ENCODE measurements at regions of chr1 and their contacts with region 1.

Region 1: DNA sequence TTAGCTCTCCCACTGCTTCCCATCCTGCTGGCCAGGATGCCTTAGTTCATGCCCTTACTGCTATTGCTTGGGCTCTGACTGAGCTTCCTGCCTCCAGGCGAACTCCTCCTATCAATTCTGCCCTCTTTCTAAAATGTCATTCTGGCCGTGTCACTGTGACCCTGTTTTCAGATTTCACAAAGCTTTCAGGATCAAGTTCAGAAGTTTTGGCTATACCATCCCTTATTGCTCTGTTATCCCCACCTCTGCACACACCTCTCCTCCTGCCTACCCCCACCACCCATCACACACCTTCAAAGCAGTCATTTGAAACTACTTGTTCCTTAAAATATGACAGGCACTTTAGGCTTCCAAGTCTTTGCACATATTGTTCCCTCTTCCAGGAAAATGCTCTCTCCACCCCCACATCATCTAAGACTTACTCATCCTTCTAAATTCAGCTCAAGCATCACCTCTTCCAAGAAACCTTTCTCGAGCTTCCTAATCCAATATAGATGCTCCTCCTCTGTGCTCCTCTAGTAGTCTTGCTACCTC is 278.1 kb downstream of the BRINP2 start:
- DNase-seq: peak; percentile 51 to 74
- ATAC-seq: peak; percentile 84
- H3K4me3 ChIP-seq: no peak overlapping the region
- H3K27ac ChIP-seq: peak overlapping the region; percentile 75 to 80 (median 78)
- H3K4me1 ChIP-seq: peaks cover 48 to 50% of the 10 kb centered on the region in 2 donors
- H3K27me3 ChIP-seq: no peaks in the 10 kb centered on the region
- CTCF ChIP-seq: no peak
- POLR2A ChIP-seq: peak in 1 of 2 donors; percentile 55

Region 2: GRCh38 chr1:177274687-177275211 is 174.1 kb before region 1 on chr1:
- in situ Hi-C with region 1: no loop called
- intact Hi-C with region 1: loop called (anchors 10 kb)
- DNase-seq: peak; percentile 50 to 77
- ATAC-seq: peak; percentile 96 to 98
- H3K4me3 ChIP-seq: no peak overlapping the region
- H3K27ac ChIP-seq: peak overlapping the region; percentile 47 to 79 (median 64)
- H3K4me1 ChIP-seq: peaks cover 27 to 35% of the 10 kb centered on the region in 2 donors
- H3K27me3 ChIP-seq: no peaks in the 10 kb centered on the region
- CTCF ChIP-seq: no peak
- POLR2A ChIP-seq: no peak

Region 3: DNA sequence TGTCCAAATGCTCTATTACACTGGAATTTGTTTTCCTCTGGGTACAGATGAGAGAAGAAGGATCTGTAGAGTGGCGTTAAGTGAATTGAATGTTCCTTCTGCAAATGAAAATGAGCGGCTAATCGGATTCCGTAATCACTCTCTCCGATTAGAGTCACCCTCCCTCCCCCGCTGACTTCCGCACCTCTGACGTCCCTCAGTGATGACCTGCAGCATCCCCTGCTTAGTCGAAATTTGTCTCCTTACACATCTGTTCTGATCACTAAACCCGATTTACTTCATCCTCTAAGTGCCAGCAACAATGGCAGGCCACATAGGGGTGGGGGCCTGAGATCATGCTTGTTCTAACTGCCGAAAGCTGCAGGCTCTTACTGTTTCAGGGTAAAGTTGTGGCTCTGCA is 142.3 kb after region 1 on chr1:
- in situ Hi-C with region 1: loop called in 1 of 4 experiments (anchors 10 kb)
- intact Hi-C with region 1: no loop called
- DNase-seq: no peak
- ATAC-seq: no peak
- H3K4me3 ChIP-seq: no peak overlapping the region
- H3K27ac ChIP-seq: no peak overlapping the region
- H3K4me1 ChIP-seq: peaks cover 0 to 12% of the 10 kb centered on the region in 2 donors
- H3K27me3 ChIP-seq: no peaks in the 10 kb centered on the region
- CTCF ChIP-seq: no peak
- POLR2A ChIP-seq: no peak

Region 4: DNA sequence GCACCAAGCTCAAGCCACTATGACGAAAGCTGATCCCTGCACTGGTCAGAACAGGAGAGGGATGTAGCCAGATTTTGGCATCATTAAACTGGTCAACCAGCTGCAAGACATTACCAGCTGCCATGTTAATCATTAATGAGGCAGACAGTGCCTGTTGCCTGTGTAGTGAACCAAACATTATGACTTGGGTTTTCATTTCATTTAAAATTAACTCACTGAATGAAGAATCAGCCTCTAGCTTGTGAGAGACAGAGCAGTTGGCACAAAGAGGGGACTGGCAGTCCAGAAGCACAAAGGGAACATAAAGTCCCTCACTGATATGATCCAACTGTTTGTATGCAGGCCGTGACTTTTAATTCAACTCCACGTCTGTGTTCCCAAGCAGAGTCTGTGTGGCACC is 202.1 kb after region 1 on chr1:
- in situ Hi-C with region 1: loop called in 1 of 4 experiments (anchors 5 kb)
- intact Hi-C with region 1: loop called (anchors 2 kb)
- DNase-seq: peak; percentile 81 to 87
- ATAC-seq: peak; percentile 98 to 99
- H3K4me3 ChIP-seq: no peak overlapping the region
- H3K27ac ChIP-seq: peak overlapping the region; percentile 77 to 94 (median 87)
- H3K4me1 ChIP-seq: peaks cover 4 to 36% of the 10 kb centered on the region in 2 donors
- H3K27me3 ChIP-seq: no peaks in the 10 kb centered on the region
- CTCF ChIP-seq: no peak
- POLR2A ChIP-seq: no peak

Region 5: DNA sequence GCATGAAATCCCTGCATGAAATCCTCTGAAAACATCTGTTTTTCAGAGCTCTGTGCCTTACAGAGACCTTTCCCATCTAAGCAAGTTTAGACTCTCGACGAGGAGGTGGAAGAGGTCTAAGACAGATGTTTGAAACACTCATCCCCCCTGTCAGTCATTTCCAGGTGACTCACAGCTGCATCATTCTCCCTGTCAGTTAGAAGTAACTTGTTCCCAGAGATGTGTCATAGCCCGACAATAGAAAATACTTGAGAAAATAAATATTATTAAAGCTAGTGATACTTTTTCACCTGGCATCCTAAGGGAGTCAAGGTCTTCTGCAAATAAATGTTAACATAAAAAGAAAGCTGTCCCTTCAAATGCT is 562.6 kb after region 1 on chr1:
- in situ Hi-C with region 1: no loop called
- intact Hi-C with region 1: loop called (anchors 10 kb)
- DNase-seq: peak; percentile 55 to 67
- ATAC-seq: peak; percentile 100
- H3K4me3 ChIP-seq: no peak overlapping the region
- H3K27ac ChIP-seq: peak overlapping the region; percentile 65 to 84 (median 78)
- H3K4me1 ChIP-seq: peaks cover 13 to 22% of the 10 kb centered on the region in 2 donors
- H3K27me3 ChIP-seq: no peaks in the 10 kb centered on the region
- CTCF ChIP-seq: no peak
- POLR2A ChIP-seq: no peak

Region 6: GRCh38 chr1:179025125-179025974 is 1576.5 kb after region 1 on chr1 and contains the start of gene FAM20B:
- in situ Hi-C with region 1: no loop called
- intact Hi-C with region 1: loop called (anchors 5 kb)
- DNase-seq: peak; percentile 91 to 94
- ATAC-seq: peak; percentile 79 to 86
- H3K4me3 ChIP-seq: peak within 1 kb of the TSS; percentile 77 to 99 (median 89)
- H3K27ac ChIP-seq: peak within 1 kb of the TSS; percentile 92 to 99 (median 98)
- H3K4me1 ChIP-seq: peaks cover 30 to 44% of the 10 kb centered on the region in 2 donors
- H3K27me3 ChIP-seq: no peaks in the 10 kb centered on the region
- CTCF ChIP-seq: peak in 1 of 5 experiments; percentile 25
- POLR2A ChIP-seq: no peak
- total RNA-seq, gene FAM20B: 19.7 to 43.7 (median 32.6) TPM

Measured in gastrocnemius medialis (tissue), 4 donors.